CD14-positive monocyte (primary cell): ENCODE measurements at regions of chr1 and their contacts with region 1.

Region 1: GRCh38 chr1:147627435-147628110 is 42.8 kb downstream of the ACP6 start:
- DNase-seq: peak; percentile 25 to 51 (median 47)
- H3K4me3 ChIP-seq: no peak overlapping the region
- H3K4me3 Mint-ChIP-seq: no peak overlapping the region
- H3K27ac ChIP-seq: no peak overlapping the region
- H3K27ac Mint-ChIP-seq: no peak overlapping the region
- H3K4me1 ChIP-seq: peaks cover 29 to 30% of the 10 kb centered on the region in 2 donors
- H3K4me1 Mint-ChIP-seq: peaks cover 20% of the 10 kb centered on the region
- H3K27me3 ChIP-seq: no peaks in the 10 kb centered on the region
- H3K27me3 Mint-ChIP-seq: peaks cover 2 to 5% (median 4%) of the 10 kb centered on the region in 3 donors
- CTCF ChIP-seq: peak; percentile 96

Region 2: GRCh38 chr1:147273409-147274336 is 353.9 kb before region 1 on chr1:
- intact Hi-C with region 1: loop called in 1 of 2 experiments (anchors 10 kb)
- DNase-seq: peak; percentile 37 to 43 (median 39)
- H3K4me3 ChIP-seq: no peak overlapping the region
- H3K4me3 Mint-ChIP-seq: no peak overlapping the region
- H3K27ac ChIP-seq: no peak overlapping the region
- H3K27ac Mint-ChIP-seq: no peak overlapping the region
- H3K4me1 ChIP-seq: no peaks in the 10 kb centered on the region
- H3K4me1 Mint-ChIP-seq: no peaks in the 10 kb centered on the region
- H3K27me3 ChIP-seq: no peaks in the 10 kb centered on the region
- H3K27me3 Mint-ChIP-seq: peaks cover 0 to 2% (median 0%) of the 10 kb centered on the region in 3 donors
- CTCF ChIP-seq: peak; percentile 74

Region 3: DNA sequence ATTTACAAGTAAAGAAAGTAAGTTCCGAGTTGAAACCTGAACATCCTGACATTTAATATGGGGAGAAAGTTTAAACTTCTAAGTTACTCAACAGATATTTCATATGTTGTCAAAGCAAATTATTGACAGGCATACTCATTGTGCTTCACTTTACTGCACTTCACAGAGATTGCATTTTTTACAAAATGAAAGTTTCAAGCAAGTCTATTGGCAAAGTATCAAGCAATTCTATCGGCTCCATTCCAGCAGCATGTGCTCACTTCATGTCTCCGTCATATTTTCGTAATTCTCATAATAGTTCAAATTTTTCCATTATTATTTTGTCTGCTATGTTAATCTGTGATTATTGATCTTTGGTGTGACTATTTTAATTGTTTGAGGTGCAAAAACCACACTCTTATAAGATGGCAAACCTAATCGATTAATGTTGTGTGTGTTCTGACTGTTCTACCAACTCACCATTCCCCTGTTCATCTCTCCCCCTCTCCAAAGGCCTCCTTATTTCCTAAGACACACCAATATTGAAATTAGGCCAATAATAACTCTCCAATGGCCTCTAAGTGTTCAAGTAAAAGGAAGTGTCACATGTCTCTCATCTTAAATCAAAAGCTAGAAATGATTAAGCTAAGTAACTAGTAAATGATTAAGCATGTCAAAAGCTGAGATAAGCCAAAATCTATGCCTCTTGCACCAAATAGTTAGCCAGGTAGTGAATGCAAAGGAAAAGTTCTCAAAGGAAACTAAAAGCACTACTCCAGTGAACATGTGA is 154.4 kb before region 1 on chr1:
- intact Hi-C with region 1: no loop called
- DNase-seq: no peak
- H3K4me3 ChIP-seq: no peak overlapping the region
- H3K4me3 Mint-ChIP-seq: no peak overlapping the region
- H3K27ac ChIP-seq: no peak overlapping the region
- H3K27ac Mint-ChIP-seq: no peak overlapping the region
- H3K4me1 ChIP-seq: no peaks in the 10 kb centered on the region
- H3K4me1 Mint-ChIP-seq: no peaks in the 10 kb centered on the region
- H3K27me3 ChIP-seq: no peaks in the 10 kb centered on the region
- H3K27me3 Mint-ChIP-seq: peaks cover 1 to 8% (median 4%) of the 10 kb centered on the region in 3 donors
- CTCF ChIP-seq: no peak

Region 4: DNA sequence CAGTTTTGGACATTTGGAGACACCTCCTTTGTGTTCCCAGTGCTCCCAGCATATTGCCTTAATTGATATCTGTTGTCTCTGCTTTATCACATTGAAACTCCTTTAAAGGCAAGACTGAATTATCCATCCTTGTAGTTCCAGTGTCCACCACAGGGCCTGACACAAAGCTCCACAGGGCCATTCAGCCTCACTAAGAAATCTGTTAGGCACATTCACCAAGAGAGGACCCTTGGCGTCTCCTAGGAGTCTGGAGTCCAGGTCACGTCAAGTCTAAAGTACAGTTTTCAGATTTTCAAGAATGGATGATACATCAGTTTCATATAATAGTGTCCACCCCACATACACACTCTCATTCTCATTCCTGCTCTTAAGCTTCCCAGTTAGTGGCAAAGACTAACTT is 37.9 kb after region 1 on chr1:
- intact Hi-C with region 1: no loop called
- DNase-seq: no peak
- H3K4me3 ChIP-seq: no peak overlapping the region
- H3K4me3 Mint-ChIP-seq: no peak overlapping the region
- H3K27ac ChIP-seq: no peak overlapping the region
- H3K27ac Mint-ChIP-seq: no peak overlapping the region
- H3K4me1 ChIP-seq: peaks cover 8 to 12% of the 10 kb centered on the region in 2 donors
- H3K4me1 Mint-ChIP-seq: peaks cover 9% of the 10 kb centered on the region
- H3K27me3 ChIP-seq: no peaks in the 10 kb centered on the region
- H3K27me3 Mint-ChIP-seq: peaks cover 0 to 2% (median 0%) of the 10 kb centered on the region in 3 donors
- CTCF ChIP-seq: peak; percentile 20

Region 5: GRCh38 chr1:147912553-147912952 is 285.0 kb after region 1 on chr1:
- intact Hi-C with region 1: no loop called
- DNase-seq: no peak
- H3K4me3 ChIP-seq: no peak overlapping the region
- H3K4me3 Mint-ChIP-seq: no peak overlapping the region
- H3K27ac ChIP-seq: no peak overlapping the region
- H3K27ac Mint-ChIP-seq: no peak overlapping the region
- H3K4me1 ChIP-seq: no peaks in the 10 kb centered on the region
- H3K4me1 Mint-ChIP-seq: no peaks in the 10 kb centered on the region
- H3K27me3 ChIP-seq: no peaks in the 10 kb centered on the region
- H3K27me3 Mint-ChIP-seq: peaks cover 4 to 9% (median 4%) of the 10 kb centered on the region in 3 donors
- CTCF ChIP-seq: no peak